ENCODE measurements at regions of chr12 and their contacts with region 1.

Region 1: DNA sequence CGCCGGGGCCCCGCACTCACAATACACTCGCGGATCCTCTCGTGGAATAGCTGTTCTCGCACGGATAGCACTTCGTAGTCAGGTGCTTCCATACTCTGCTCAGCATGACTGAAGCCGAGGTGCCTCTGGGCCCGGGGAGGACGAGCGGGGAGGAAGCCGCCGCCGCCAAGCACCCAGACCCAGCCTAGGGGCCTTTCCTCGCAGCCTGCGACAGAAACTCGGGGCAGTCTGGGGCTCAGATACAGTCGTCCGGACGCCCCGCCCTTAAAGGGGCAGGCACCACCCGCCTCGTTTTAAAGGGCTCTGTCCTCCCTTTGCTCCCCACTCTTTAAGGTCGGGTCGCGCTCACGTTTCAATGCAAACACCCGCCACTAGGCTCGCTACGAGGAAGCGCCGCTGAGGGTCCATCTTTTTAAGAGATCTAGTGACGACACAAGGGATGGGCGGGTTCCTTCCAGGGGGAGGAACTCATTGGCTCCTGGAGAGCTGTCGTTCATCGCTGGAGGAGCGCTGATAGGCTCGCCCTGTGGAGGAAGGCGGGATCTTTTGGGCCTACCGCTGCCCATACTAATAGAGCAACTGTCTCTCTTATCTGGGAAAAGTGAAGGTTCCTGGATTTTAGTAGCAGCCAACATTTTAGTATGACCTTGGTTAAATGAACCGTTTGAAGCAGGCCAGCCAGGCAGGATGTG is at the start of gene LMBR1L:
- DNase-seq: peak; percentile 94 to 99
- ATAC-seq: peak; percentile 91 to 98 (median 91)
- H3K4me3 ChIP-seq: peak within 1 kb of the TSS; percentile 96
- H3K4me3 Mint-ChIP-seq: peak within 1 kb of the TSS; percentile 100
- H3K27ac ChIP-seq: peak within 1 kb of the TSS; percentile 94
- H3K27ac Mint-ChIP-seq: peak within 1 kb of the TSS; percentile 98
- H3K4me1 ChIP-seq: peaks cover 24% of the 10 kb centered on the region
- H3K4me1 Mint-ChIP-seq: peaks cover 28 to 42% of the 10 kb centered on the region in 2 donors
- H3K27me3 ChIP-seq: no peaks in the 10 kb centered on the region
- H3K27me3 Mint-ChIP-seq: no peaks in the 10 kb centered on the region
- CTCF ChIP-seq: peak; percentile 44
- total RNA-seq, gene LMBR1L: 262 to 294 (median 271) TPM

Region 2: DNA sequence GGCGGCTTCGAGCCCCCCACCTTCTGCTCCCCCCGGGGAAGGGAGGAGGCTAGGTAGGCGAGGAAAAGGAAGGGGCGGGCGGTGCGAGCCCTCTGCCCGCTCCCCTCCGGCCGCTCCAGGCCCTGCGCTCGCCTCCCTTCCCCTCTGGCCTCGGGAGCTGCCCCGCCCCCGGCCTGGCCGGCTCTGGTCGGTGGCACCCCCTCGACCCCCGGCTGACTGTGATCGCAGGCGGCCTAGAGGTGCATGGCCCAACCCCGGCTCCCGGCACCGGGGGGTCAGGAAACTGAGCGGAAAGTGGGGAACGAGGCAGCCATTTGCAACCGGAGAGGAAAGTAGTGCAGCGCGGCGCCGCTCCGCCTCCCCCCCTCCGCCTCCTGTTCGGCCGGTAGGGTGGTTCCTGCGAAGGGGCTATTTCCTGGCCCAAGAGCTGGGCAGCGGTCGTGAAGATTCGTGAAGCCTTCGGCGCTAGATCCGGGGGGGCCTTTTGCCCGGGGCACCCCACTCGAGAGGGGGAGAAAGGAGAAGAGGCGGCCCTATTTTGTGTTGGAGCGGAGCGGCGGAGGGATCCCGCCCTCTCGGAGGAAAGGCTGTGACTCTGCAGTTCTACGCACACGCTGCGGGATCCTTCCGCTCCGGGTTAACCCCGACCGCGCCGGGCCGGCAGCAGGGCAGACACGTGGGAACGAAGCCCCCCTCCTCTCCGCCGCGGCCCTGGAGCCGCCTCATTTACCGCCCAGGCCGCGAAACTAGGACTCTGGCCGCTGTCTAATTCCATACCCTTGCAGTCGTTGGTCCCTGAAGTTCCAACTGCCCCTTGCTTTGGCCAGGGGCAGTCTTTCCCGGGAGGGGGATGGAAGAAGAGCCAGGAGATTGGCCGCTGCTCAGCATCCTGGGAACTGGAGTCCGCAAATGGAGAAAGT is 50.1 kb before region 1 on chr12 and contains the start of gene KMT2D:
- intact Hi-C with region 1: loop called (anchors 5 kb)
- DNase-seq: peak; percentile 83 to 96
- ATAC-seq: peak; percentile 79 to 88 (median 79)
- H3K4me3 ChIP-seq: peak within 1 kb of the TSS; percentile 68
- H3K4me3 Mint-ChIP-seq: peak within 1 kb of the TSS; percentile 91
- H3K27ac ChIP-seq: peak within 1 kb of the TSS; percentile 77
- H3K27ac Mint-ChIP-seq: peak within 1 kb of the TSS; percentile 87 to 92
- H3K4me1 ChIP-seq: peaks cover 47% of the 10 kb centered on the region
- H3K4me1 Mint-ChIP-seq: peaks cover 57% of the 10 kb centered on the region in 2 donors
- H3K27me3 ChIP-seq: no peaks in the 10 kb centered on the region
- H3K27me3 Mint-ChIP-seq: no peaks in the 10 kb centered on the region
- CTCF ChIP-seq: no peak
- total RNA-seq, gene KMT2D: 164 to 186 (median 182) TPM

Region 3: GRCh38 chr12:49088190-49088931 is 22.2 kb before region 1 on chr12:
- intact Hi-C with region 1: loop called (anchors 2 kb)
- DNase-seq: peak; percentile 62 to 92
- ATAC-seq: peak; percentile 88 to 94 (median 93)
- H3K4me3 ChIP-seq: no peak overlapping the region
- H3K4me3 Mint-ChIP-seq: peak overlapping the region; percentile 36
- H3K27ac ChIP-seq: no peak overlapping the region
- H3K27ac Mint-ChIP-seq: no peak overlapping the region
- H3K4me1 ChIP-seq: peaks cover 48% of the 10 kb centered on the region
- H3K4me1 Mint-ChIP-seq: peaks cover 13 to 38% of the 10 kb centered on the region in 2 donors
- H3K27me3 ChIP-seq: peaks cover 42% of the 10 kb centered on the region
- H3K27me3 Mint-ChIP-seq: peaks cover 10 to 40% of the 10 kb centered on the region in 2 donors
- CTCF ChIP-seq: peak; percentile 88

Region 4: GRCh38 chr12:49138587-49138986 is 28.0 kb after region 1 on chr12:
- intact Hi-C with region 1: no loop called
- DNase-seq: no peak
- ATAC-seq: no peak
- H3K4me3 ChIP-seq: no peak overlapping the region
- H3K4me3 Mint-ChIP-seq: no peak overlapping the region
- H3K27ac ChIP-seq: no peak overlapping the region
- H3K27ac Mint-ChIP-seq: no peak overlapping the region
- H3K4me1 ChIP-seq: no peaks in the 10 kb centered on the region
- H3K4me1 Mint-ChIP-seq: no peaks in the 10 kb centered on the region
- H3K27me3 ChIP-seq: no peaks in the 10 kb centered on the region
- H3K27me3 Mint-ChIP-seq: no peaks in the 10 kb centered on the region
- CTCF ChIP-seq: no peak

Measured in natural killer cell (primary cell).